ENCODE measurements at regions of chr3 and their contacts with region 1.

Region 1: DNA sequence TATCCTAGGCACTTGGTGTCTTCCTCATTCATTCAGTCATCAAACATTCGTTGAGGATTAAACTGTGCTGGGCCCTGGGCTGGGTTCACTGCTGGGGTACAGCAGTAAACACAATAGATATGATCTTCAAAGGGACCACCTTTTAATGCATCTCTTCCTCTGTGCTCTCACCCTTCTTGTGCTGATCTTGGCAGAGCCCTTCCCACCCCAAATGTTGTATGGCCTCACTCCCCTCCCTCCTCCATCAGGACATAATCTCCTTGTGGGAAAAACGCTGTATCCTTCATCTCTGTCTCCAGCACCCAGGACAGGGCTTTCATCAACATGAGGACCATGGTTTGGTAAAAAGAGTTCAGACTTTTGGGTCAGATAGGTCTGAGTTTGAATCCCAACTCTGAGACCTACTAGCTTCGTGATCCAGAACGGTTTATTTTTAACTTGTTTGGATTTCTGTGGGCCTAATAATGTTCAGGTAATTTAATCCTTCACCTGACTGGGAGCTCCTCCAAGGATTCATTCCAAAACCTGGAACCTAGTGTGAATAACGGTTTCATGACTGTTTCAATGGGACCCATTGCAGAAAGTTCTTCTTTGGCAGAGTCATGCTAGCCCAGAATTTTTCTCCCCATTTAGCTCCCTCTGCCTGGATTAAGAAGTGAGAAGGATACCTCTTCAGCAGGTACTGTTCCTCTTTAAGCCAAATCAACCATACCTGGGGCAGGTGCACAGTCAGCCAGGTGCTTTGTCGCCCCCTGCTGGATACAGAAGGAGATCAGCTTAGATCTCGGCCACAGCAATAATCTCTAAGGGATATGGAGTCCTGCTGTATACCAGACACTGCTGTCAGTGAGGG is 5.2 kb upstream of the WNT7A start:
- DNase-seq: peak in 1 of 2 experiments; percentile 82
- H3K4me3 ChIP-seq: no peak overlapping the region
- H3K27ac ChIP-seq: no peak overlapping the region
- H3K4me1 ChIP-seq: peaks cover 0 to 6% (median 0%) of the 10 kb centered on the region in 4 experiments; a peak in 3 of 7 replicates
- H3K27me3 ChIP-seq: peaks cover 15 to 38% (median 23%) of the 10 kb centered on the region in 4 experiments
- CTCF ChIP-seq: peak; percentile 81 to 93 (median 93)
- EP300 ChIP-seq: no peak
- POLR2A ChIP-seq: no peak
- RAD21 ChIP-seq: peak; percentile 93 to 96

Region 2: GRCh38 chr3:13700362-13700761 is 184.7 kb before region 1 on chr3:
- CTCF ChIA-PET with region 1: interaction called, 16 read pairs
- POLR2A ChIA-PET with region 1: no interaction called
- DNase-seq: no peak
- H3K4me3 ChIP-seq: no peak overlapping the region
- H3K27ac ChIP-seq: no peak overlapping the region
- H3K4me1 ChIP-seq: peaks cover 5 to 15% (median 7%) of the 10 kb centered on the region in 4 experiments
- H3K27me3 ChIP-seq: no peaks in the 10 kb centered on the region
- CTCF ChIP-seq: no peak
- EP300 ChIP-seq: no peak
- POLR2A ChIP-seq: no peak
- RAD21 ChIP-seq: no peak

Region 3: DNA sequence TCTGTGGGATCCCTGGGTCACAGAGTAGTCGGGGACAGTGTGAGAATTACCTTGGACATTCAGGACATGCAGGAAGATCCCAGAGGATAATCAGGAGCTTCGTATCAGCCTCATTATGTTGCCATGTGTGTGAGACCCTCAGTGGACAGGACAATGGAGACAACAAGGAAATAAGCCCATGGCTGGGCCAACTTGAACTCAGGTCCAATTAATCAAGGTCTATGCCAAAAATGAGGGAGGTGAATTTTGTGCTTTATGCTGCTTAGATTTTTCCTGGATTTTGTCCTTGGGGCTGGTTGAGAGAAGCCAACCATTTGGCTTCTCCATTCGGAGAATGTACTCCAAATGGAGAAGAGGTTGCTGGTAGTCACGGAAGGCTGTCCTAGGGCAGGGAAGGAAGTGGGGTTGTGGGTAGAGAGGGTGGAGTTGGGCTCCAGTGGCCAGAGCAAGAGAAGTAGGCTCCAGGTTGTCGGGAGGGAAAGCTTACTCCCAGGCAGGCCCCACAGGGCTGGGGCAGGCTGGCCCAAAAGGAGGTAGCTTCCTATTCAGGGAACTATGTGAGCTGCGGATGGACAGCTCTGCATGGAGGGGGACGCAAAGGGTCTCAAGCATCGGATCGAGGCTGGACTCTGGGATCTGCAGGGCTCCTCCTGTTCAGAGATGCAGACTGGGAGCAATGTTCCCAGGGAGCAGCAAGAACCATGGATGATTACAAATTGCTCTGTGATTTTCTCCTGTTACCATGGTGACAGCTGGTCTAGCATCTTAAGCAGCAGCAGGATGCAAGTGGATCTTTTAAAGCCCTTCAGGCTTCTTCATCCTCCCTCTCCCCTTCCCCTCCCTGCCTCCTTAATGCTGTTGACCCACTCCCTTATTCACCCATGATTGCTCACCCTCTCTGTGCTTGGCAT is 96.3 kb before region 1 on chr3:
- CTCF ChIA-PET with region 1: interaction called, 16 read pairs
- POLR2A ChIA-PET with region 1: no interaction called
- DNase-seq: no peak
- H3K4me3 ChIP-seq: no peak overlapping the region
- H3K27ac ChIP-seq: no peak overlapping the region
- H3K4me1 ChIP-seq: peaks cover 0 to 20% (median 9%) of the 10 kb centered on the region in 4 experiments; a peak in 5 of 7 replicates
- H3K27me3 ChIP-seq: peaks cover 0 to 3% (median 1%) of the 10 kb centered on the region in 4 experiments; a peak in 1 of 7 replicates
- CTCF ChIP-seq: no peak
- EP300 ChIP-seq: no peak
- POLR2A ChIP-seq: no peak
- RAD21 ChIP-seq: no peak

Region 4: DNA sequence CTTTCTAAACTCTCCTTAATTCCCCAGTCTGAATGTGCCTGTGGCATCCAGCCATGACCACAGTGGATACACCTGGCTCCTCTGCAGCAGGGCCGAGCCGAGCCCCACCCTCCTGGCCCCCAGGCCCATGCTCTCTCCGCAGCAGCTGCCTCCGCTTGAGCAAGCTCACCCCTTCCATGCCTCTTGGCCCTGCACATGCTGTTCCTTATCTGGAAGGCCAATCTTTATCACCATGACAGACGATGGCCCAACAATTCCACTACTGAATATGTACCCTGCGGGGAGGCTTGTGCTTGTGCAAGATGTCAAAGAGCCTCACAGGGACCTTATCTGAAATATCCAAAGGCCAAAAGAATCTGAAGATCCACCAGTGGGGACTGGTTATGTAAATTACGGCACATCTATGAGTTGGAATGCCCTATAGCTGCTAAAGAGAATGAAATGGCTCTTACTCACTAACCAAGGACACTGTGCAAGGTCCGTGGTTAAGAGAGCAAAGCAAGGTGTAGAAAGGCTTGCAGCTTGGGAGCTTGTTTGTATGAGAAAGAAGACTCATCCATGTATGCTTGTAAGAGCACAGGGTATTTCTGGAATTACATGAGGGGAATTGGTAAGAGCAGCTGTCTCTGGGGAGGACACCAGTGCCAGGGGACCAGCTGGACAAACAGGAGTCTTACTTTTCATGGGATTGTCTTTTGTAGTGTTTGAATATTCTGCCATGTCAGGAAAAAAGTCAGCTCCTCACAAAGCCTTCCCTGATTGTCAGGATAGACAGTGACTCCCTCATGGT is 60.4 kb before region 1 on chr3:
- CTCF ChIA-PET with region 1: interaction called, 11 read pairs
- POLR2A ChIA-PET with region 1: no interaction called
- DNase-seq: no peak
- H3K4me3 ChIP-seq: no peak overlapping the region
- H3K27ac ChIP-seq: no peak overlapping the region
- H3K4me1 ChIP-seq: peaks cover 0 to 2% (median 0%) of the 10 kb centered on the region in 4 experiments; a peak in 1 of 7 replicates
- H3K27me3 ChIP-seq: no peaks in the 10 kb centered on the region
- CTCF ChIP-seq: no peak
- EP300 ChIP-seq: no peak
- POLR2A ChIP-seq: no peak
- RAD21 ChIP-seq: no peak

Region 5: GRCh38 chr3:13866041-13866965 is 18.8 kb before region 1 on chr3:
- CTCF ChIA-PET with region 1: interaction called, 19 read pairs
- POLR2A ChIA-PET with region 1: no interaction called
- DNase-seq: no peak
- H3K4me3 ChIP-seq: no peak overlapping the region
- H3K27ac ChIP-seq: no peak overlapping the region
- H3K4me1 ChIP-seq: no peaks in the 10 kb centered on the region
- H3K27me3 ChIP-seq: peaks cover 0 to 6% (median 3%) of the 10 kb centered on the region in 4 experiments; a peak in 2 of 7 replicates
- CTCF ChIP-seq: no peak
- EP300 ChIP-seq: no peak
- POLR2A ChIP-seq: no peak
- RAD21 ChIP-seq: no peak

Region 6: DNA sequence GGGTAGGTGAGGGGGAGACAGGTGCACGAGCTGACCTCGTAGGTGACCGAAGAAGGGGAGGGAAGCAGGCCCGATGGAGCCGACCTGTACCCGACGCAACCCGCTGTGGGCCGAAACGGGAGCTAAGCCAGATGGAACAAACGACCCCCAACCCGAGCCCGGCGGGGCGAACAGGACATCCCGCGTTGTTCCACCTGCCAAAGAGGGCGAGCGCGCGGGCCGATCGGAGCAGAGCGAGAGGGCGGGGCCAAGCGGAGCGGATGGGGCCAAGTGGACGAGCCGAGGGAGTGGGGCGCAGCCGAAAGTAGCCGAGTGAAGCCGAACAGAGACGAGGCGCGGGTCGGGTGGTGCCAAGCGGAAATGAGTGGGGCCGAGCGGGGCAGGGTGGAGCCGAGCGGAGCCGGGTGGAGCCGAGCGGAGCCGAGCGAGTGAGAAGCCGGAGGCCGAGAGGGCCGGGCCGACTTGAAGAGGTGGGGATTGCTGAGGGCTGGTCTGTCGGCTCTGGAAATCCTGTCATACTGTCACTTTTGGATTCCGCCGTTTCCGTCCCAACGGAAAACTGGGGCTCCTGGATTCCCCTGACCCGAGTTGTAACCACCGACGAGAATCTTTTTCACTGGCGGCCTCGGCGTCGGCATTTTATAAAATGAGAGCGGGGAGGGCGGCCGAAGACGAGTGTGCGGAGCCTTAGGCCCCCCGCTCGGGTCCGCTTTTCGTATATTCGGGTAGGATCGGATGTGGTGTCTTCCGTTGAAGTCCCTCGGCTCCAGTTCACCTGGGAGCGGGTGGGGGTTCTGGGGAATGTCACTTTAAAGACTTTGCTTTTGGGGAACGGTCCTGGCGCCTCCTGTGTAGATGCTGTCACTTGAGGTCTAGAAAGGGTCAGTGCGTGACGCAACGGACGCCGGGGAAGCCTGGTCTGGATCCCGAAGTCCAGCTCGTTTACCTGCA is 10.4 kb after region 1 on chr3:
- CTCF ChIA-PET with region 1: interaction called, 32 read pairs
- POLR2A ChIA-PET with region 1: no interaction called
- DNase-seq: peak; percentile 82 to 98
- H3K4me3 ChIP-seq: peak overlapping the region; percentile 57 to 79 (median 64)
- H3K27ac ChIP-seq: no peak overlapping the region
- H3K4me1 ChIP-seq: peaks cover 0 to 13% (median 8%) of the 10 kb centered on the region in 4 experiments; a peak in 4 of 7 replicates
- H3K27me3 ChIP-seq: peaks cover 8 to 24% (median 20%) of the 10 kb centered on the region in 4 experiments
- CTCF ChIP-seq: no peak
- EP300 ChIP-seq: no peak
- POLR2A ChIP-seq: no peak
- RAD21 ChIP-seq: no peak

Region 7: GRCh38 chr3:14096745-14097144 is 211.7 kb after region 1 on chr3:
- CTCF ChIA-PET with region 1: no interaction called
- POLR2A ChIA-PET with region 1: no interaction called
- DNase-seq: no peak
- H3K4me3 ChIP-seq: no peak overlapping the region
- H3K27ac ChIP-seq: no peak overlapping the region
- H3K4me1 ChIP-seq: no peaks in the 10 kb centered on the region
- H3K27me3 ChIP-seq: no peaks in the 10 kb centered on the region
- CTCF ChIP-seq: no peak
- EP300 ChIP-seq: no peak
- POLR2A ChIP-seq: no peak
- RAD21 ChIP-seq: no peak